ENCODE measurements at regions of chr11 and their contacts with region 1.

Region 1: DNA sequence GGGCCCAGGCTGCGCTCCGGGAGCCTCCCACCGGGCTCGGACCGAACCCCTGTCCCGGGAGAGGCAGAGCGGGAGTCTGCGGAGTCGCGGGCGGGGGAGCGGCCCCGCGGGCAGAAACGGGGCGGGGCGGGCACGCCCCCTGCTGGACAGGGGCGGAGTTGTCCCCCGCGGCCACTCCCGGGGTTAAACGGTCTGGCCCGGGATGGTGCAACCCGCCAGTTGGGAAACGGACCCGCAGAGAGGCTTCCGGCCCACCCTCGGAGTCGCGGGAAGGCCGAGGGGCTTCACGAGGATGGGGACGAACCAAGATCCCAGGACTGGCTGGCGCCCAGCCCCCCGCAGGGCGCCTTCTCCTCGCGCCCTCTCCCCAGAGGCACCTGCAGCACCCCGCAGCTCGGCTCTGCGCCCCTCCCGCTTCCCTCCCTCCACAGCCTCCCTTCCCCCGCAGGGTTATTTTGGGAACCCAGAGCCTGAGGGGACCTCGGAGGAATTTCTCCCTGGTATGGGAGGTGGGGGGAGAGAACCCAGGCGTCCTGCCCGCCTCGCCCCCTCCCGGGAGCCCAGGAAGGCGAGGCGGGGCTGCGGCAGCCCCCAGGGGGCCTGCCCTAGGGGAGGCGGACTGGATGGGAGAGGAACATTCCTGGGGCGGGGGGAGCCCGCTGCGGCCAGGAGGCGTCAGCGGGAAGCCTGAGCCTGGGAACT is 902 bp downstream of the RASGRP2 start:
- DNase-seq: peak; percentile 86
- ATAC-seq: peak; percentile 47
- H3K4me3 Mint-ChIP-seq: peak overlapping the region; percentile 73
- H3K27ac Mint-ChIP-seq: no peak overlapping the region
- H3K4me1 Mint-ChIP-seq: peaks cover 25% of the 10 kb centered on the region
- H3K27me3 Mint-ChIP-seq: peaks cover 5% of the 10 kb centered on the region

Region 2: DNA sequence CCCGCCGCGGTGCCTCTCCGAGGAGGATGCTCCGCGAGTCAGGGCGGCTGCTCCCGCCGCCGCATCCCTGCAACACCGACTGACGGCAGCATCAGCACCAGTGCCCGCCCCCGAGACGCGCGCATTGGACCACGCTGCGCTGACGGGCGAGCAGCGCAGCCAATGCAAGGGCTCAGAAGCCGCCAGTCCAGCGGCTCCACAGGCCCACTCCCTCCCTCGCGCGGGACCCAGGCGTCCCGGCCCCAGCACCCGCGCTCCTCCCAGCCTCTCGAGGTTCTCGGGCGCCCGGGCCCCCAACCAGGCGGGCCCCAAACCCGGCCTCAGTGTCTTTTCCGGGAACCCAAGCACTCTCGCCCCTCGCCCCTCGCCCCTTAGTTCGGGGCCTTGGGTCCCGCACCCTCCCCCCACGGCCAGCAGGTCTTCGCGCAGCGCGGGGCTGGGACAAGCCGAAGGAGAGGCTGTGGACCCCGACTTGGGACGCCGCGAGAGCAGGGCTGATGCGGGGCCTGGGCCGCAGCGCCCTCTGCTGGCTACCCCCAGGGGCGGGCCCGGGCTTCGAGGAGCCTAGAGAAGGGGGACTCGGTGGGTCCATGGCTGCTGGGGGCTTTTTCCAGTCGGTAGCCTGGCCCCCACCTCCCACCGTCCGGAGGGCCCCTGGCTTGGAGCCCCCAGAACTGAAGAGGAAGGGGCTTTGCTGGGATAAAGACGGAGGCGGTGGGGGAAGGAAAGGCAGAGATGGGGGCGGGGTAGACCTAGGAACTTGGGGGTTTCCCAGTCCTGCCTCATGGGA is 19.7 kb before region 1 on chr11 and contains the start of gene NRXN2:
- CTCF ChIA-PET with region 1: interaction called, 5 read pairs
- POLR2A ChIA-PET with region 1: no interaction called
- intact Hi-C with region 1: loop called in 1 of 2 experiments (anchors 1 kb)
- DNase-seq: peak; percentile 94
- ATAC-seq: peak; percentile 99
- H3K4me3 Mint-ChIP-seq: peak within 1 kb of the TSS; percentile 46
- H3K27ac Mint-ChIP-seq: no peak within 1 kb of the TSS
- H3K4me1 Mint-ChIP-seq: peaks cover 11% of the 10 kb centered on the region
- H3K27me3 Mint-ChIP-seq: peaks cover 19% of the 10 kb centered on the region
- total RNA-seq, gene NRXN2: 0.18 to 0.39 TPM

Region 3: GRCh38 chr11:64767344-64768299 is 24.6 kb after region 1 on chr11:
- CTCF ChIA-PET with region 1: interaction called, 10 read pairs
- POLR2A ChIA-PET with region 1: interaction called, 12 read pairs
- intact Hi-C with region 1: loop called in 1 of 2 experiments (anchors 2 kb)
- DNase-seq: peak; percentile 90
- ATAC-seq: peak; percentile 50
- H3K4me3 Mint-ChIP-seq: no peak overlapping the region
- H3K27ac Mint-ChIP-seq: peak overlapping the region; percentile 88
- H3K4me1 Mint-ChIP-seq: peaks cover 91% of the 10 kb centered on the region
- H3K27me3 Mint-ChIP-seq: no peaks in the 10 kb centered on the region

Region 4: DNA sequence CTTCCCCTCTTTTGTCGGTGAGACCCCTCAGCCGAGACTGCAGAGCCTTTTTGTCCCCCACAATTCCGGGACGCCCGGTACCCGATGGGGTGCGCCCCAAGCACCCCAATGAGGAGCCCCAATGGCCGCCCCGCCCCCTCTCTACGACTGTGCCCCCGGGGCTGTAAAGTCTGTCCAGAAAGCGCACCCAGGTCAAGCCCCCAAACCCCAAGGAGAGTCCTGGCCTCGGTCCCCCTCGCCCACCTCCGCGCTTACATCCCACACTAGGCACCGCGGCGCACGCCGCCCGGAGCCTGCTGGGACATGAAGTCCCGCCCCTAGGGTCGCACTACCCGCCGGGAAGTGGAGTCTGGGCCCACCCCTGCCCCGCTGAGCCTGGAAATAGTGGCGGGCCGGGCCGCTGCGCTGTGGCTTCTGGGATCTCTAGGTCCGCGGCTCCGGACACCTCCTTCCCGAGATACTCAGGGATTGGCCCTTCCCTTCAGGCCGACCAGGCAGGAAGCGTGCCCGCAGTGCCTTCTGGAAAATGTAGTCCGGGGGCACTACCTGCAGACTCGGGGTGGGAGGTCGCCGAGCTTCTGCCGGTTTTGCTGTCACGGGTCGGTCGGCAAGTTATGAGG is 67.3 kb after region 1 on chr11 and contains the start of gene MEN1:
- CTCF ChIA-PET with region 1: no interaction called
- POLR2A ChIA-PET with region 1: no interaction called
- intact Hi-C with region 1: loop called in 1 of 2 experiments (anchors 2 kb)
- DNase-seq: peak; percentile 92
- ATAC-seq: peak; percentile 95
- H3K4me3 Mint-ChIP-seq: peak within 1 kb of the TSS; percentile 93
- H3K27ac Mint-ChIP-seq: peak within 1 kb of the TSS; percentile 85
- H3K4me1 Mint-ChIP-seq: peaks cover 21% of the 10 kb centered on the region
- H3K27me3 Mint-ChIP-seq: no peaks in the 10 kb centered on the region
- total RNA-seq, gene MEN1: 34.8 to 38.5 TPM